ENCODE measurements at regions of chr3 and their contacts with region 1.

Region 1: DNA sequence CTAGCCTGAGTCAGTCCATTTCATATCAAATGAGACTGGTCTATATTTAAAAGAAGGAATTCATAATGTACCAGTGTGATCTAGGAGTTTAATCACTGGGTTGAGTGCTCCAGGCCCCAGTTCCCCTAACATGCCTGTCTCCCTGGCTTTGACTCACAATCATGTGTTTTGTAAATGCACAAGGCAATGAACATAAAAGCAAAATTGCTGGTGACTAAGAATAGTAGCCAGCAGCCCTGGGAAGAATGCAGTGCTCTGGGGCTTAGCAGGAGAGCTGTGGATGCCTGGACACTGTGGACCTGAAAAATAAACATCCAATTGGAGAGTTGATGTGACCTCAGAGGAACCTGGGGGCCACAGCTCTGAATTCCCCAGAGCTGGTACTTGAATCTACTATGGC is 50.3 kb downstream of the SYNPR start:
- DNase-seq: no peak
- H3K4me3 ChIP-seq: no peak overlapping the region
- H3K27ac ChIP-seq: no peak overlapping the region
- H3K4me1 ChIP-seq: no peaks in the 10 kb centered on the region
- H3K27me3 ChIP-seq: no peaks in the 10 kb centered on the region
- CTCF ChIP-seq: no peak
- EP300 ChIP-seq: no peak
- POLR2A ChIP-seq: no peak

Region 2: DNA sequence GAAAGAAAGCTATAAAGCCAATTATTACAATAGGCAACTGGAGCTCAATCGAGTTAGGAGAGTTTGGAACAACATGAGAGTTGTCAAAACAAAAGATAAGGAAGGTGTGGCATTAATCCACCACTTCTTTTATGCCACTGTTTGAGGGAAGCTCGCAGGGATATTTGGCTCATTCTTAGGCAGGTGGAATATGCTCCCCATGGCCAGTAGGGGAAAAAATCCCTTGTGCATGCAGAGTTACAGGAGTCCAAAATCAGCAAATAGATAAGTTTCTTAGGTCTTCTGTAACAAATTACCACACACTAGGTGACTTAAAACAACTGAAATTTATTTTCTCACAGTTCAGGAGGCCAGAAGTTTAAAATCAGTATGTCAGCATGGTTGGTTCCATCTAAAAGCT is 185.7 kb before region 1 on chr3:
- intact Hi-C with region 1: loop called in 1 of 4 experiments (anchors 10 kb)
- DNase-seq: no peak
- H3K4me3 ChIP-seq: no peak overlapping the region
- H3K27ac ChIP-seq: no peak overlapping the region
- H3K4me1 ChIP-seq: no peaks in the 10 kb centered on the region
- H3K27me3 ChIP-seq: no peaks in the 10 kb centered on the region
- CTCF ChIP-seq: no peak
- EP300 ChIP-seq: no peak
- POLR2A ChIP-seq: no peak

Region 3: DNA sequence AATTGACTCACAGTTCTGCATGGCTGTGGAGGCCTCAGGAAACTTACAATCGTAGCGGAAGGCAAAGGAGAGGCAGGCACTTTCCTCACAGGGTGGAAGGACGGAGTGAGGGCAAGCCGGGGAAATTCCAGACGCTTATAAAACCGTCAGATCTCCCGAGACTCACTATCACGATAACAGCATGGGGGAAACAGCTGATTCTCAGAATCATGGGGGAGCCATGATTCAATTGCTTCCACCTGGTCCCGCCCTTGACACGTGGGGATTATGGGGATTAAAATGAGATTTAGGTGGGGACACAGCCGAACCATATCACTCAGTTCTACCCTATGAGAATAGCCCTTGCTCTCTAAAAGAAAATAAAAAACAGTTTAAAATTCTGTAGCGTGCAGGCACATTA is 63.6 kb before region 1 on chr3:
- intact Hi-C with region 1: no loop called
- DNase-seq: no peak
- H3K4me3 ChIP-seq: no peak overlapping the region
- H3K27ac ChIP-seq: no peak overlapping the region
- H3K4me1 ChIP-seq: no peaks in the 10 kb centered on the region
- H3K27me3 ChIP-seq: no peaks in the 10 kb centered on the region
- CTCF ChIP-seq: no peak
- EP300 ChIP-seq: no peak
- POLR2A ChIP-seq: no peak

Region 4: GRCh38 chr3:63279005-63279878 is 49.1 kb before region 1 on chr3:
- intact Hi-C with region 1: no loop called
- DNase-seq: no peak
- H3K4me3 ChIP-seq: no peak overlapping the region
- H3K27ac ChIP-seq: no peak overlapping the region
- H3K4me1 ChIP-seq: no peaks in the 10 kb centered on the region
- H3K27me3 ChIP-seq: no peaks in the 10 kb centered on the region
- CTCF ChIP-seq: no peak
- EP300 ChIP-seq: no peak
- POLR2A ChIP-seq: no peak

Region 5: DNA sequence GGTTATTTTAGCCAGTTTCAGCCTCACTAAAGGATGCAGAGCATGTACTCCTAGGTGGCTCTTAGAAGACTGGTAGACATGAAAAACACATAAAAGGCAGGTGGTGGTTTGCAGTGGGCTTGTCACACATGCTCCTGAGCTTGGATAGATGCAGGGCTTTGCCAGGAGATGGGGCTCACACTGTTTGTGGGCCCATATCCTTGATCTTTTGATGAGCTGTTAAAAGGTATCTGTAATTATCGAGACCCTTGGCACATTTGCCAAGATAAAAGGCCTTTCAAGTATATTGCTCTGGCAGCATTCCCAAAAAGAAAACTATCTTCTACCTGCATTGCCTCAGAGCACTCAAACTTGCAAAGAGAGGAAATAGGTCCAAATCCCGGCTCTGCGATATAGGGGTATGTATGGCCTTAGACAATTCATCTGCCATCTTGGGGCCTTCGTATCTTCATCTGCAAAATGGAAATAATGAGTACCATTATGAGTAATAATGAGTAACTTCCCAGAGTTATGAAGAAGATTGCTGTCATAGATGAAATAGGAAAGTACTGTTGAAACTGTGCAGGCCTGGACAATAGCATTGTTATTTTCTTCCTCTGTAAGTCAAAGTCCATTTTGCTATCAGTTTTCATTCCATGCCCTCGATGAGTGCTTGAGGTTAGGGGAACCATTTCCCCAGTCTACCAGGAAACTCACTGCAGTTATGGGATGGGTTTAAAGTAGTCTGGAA is 122.4 kb after region 1 on chr3:
- intact Hi-C with region 1: no loop called
- DNase-seq: no peak
- H3K4me3 ChIP-seq: no peak overlapping the region
- H3K27ac ChIP-seq: no peak overlapping the region
- H3K4me1 ChIP-seq: no peaks in the 10 kb centered on the region
- H3K27me3 ChIP-seq: no peaks in the 10 kb centered on the region
- CTCF ChIP-seq: no peak
- EP300 ChIP-seq: no peak
- POLR2A ChIP-seq: no peak

Region 6: DNA sequence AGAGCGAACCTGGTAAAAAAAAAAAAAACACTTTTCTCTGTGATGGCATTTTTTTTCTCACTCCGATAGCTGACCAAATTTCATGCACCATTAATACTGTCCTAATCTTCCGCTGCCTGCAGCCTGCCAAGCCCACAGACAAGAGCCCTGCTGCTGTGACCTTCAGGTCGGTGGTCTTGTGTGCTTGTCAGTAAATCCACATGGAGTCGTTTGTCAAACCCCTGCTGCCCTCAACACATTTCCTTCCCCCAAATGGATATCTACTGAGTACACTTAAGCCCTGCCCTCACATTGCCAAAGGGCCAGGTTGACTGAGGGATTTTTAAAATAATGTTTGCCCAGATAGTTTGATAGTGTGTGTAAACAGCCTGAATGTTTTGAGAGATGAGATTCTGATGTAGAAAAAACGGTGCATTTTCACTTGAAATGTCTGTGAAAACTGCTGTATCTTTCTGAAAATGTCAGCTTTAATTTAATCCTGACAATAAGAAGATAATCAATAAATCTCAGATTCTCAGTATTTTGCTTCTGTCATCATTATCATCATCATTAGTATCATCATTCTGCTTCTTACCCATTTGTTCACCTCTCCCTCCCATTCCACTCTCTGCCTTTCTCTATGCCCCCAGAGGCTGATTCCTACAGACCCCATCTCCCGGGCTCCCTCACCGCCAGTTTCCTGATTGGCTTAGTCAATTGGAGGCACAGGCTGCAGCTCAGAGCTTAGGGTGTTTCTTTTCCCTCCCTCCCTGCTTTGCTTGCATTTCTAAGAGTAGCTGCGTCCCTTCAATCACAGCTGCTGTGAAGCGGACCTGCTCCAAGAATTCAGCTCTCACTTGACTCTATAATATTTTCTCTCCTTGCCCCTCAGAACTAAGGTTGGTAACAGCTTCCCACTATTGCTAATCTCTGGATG is 315.8 kb after region 1 on chr3:
- intact Hi-C with region 1: no loop called
- DNase-seq: no peak
- H3K4me3 ChIP-seq: no peak overlapping the region
- H3K27ac ChIP-seq: no peak overlapping the region
- H3K4me1 ChIP-seq: no peaks in the 10 kb centered on the region
- H3K27me3 ChIP-seq: no peaks in the 10 kb centered on the region
- CTCF ChIP-seq: no peak
- EP300 ChIP-seq: no peak
- POLR2A ChIP-seq: no peak